ENCODE measurements at regions of chr15 and their contacts with region 1.

Region 1: GRCh38 chr15:55279746-55280351 is 9.8 kb downstream of the RAB27A start:
- DNase-seq: peak; percentile 84
- ATAC-seq: peak; percentile 75
- H3K4me3 Mint-ChIP-seq: peak overlapping the region; percentile 41
- H3K27ac Mint-ChIP-seq: peak overlapping the region; percentile 98
- H3K4me1 Mint-ChIP-seq: peaks cover 92% of the 10 kb centered on the region
- H3K27me3 Mint-ChIP-seq: no peaks in the 10 kb centered on the region
- CTCF ChIP-seq: no peak

Region 2: GRCh38 chr15:55221090-55222011 is 58.5 kb before region 1 on chr15:
- CTCF ChIA-PET with region 1: interaction called, 6 read pairs
- POLR2A ChIA-PET with region 1: interaction called, 11 read pairs
- intact Hi-C with region 1: loop called (anchors 2 kb)
- DNase-seq: peak; percentile 78
- ATAC-seq: peak; percentile 74
- H3K4me3 Mint-ChIP-seq: peak overlapping the region; percentile 47
- H3K27ac Mint-ChIP-seq: peak overlapping the region; percentile 95
- H3K4me1 Mint-ChIP-seq: peaks cover 77% of the 10 kb centered on the region
- H3K27me3 Mint-ChIP-seq: no peaks in the 10 kb centered on the region
- CTCF ChIP-seq: no peak

Region 3: GRCh38 chr15:55241891-55242290 is 38.0 kb before region 1 on chr15:
- CTCF ChIA-PET with region 1: interaction called, 4 read pairs
- POLR2A ChIA-PET with region 1: interaction called, 9 read pairs
- intact Hi-C with region 1: loop called (anchors 5 kb)
- DNase-seq: no peak
- ATAC-seq: peak; percentile 26
- H3K4me3 Mint-ChIP-seq: no peak overlapping the region
- H3K27ac Mint-ChIP-seq: peak overlapping the region; percentile 85
- H3K4me1 Mint-ChIP-seq: peaks cover 82% of the 10 kb centered on the region
- H3K27me3 Mint-ChIP-seq: no peaks in the 10 kb centered on the region
- CTCF ChIP-seq: no peak

Region 4: DNA sequence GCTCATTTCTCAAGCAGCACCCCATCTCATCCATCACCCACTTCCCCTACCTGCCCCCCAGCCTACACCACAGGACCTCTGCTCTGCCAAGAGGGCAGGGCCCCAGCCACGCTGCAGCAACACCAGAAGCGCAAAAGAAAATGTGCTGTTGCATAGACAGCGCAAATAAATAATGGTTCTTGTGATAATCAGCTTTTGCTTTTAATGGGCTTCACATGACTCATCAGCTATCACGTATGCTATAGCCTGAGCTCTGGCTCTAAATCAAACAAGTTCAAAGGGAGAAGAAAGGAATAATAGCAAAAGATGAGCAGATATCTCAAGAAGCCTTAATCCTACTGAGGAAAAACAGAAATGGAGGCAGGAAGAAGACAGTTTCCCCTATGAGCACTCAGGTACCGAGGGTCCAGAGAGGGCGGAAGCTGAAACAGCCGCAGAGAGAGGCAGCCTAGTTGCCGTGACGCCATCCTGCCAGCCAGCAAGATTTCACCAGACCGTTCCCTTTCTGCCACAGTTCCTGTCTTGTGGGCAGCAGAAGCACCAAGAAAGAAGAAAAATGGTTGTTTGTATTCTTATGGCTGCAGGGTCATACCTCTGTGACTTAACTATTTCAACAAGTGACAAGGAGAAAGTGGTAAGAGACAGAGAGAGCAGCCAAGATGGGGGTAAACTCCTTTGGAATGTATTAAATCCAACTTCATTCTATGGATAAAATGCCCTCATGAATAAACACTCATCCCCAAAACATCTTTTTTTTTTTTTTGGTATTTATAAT is 12.3 kb before region 1 on chr15:
- CTCF ChIA-PET with region 1: interaction called, 11 read pairs
- POLR2A ChIA-PET with region 1: interaction called, 30 read pairs
- intact Hi-C with region 1: no loop called
- DNase-seq: peak; percentile 87
- ATAC-seq: peak; percentile 91
- H3K4me3 Mint-ChIP-seq: peak overlapping the region; percentile 72
- H3K27ac Mint-ChIP-seq: peak overlapping the region; percentile 99
- H3K4me1 Mint-ChIP-seq: peaks cover 77% of the 10 kb centered on the region
- H3K27me3 Mint-ChIP-seq: no peaks in the 10 kb centered on the region
- CTCF ChIP-seq: no peak